Natural killer cell (primary cell): ENCODE measurements at regions of chr4 and their contacts with region 1.

Region 1: DNA sequence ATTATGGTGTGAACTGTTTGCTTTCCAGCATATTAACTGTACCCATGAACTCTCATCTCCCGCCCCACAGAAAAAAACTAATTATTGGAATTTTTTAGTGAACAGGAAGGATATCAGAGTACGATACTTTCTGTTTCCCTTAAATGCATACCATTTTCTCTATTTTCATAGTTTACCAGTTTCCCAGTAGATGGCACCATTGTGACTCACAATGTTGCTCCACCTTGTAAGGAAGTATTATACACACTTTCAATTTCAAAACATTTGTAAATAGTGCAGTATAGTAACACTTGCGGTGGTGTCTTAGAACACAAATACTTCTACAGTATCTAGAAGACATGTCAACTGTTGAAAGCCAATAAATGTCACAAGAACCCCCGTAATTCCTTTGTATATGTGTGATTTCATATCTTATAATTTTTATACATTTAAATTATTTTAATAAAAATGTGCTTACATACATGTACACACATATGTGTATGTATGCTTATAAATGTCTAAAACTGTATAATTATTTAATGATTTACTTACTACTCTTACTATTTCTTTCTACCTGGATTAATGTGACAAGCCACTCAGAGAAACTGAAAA is 167.3 kb downstream of the SLIT2 start:
- DNase-seq: peak in 1 of 2 donors; percentile 66
- ATAC-seq: peak; percentile 83 to 90 (median 89)
- H3K4me3 ChIP-seq: no peak overlapping the region
- H3K4me3 Mint-ChIP-seq: peak overlapping the region; percentile 45
- H3K27ac ChIP-seq: no peak overlapping the region
- H3K27ac Mint-ChIP-seq: no peak overlapping the region
- H3K4me1 ChIP-seq: no peaks in the 10 kb centered on the region
- H3K4me1 Mint-ChIP-seq: peaks cover 0 to 8% of the 10 kb centered on the region in 2 donors
- H3K27me3 ChIP-seq: no peaks in the 10 kb centered on the region
- H3K27me3 Mint-ChIP-seq: peaks cover 0 to 2% of the 10 kb centered on the region in 2 donors
- CTCF ChIP-seq: peak; percentile 44

Region 2: GRCh38 chr4:20370274-20370673 is 48.7 kb before region 1 on chr4:
- intact Hi-C with region 1: no loop called
- DNase-seq: no peak
- ATAC-seq: no peak
- H3K4me3 ChIP-seq: no peak overlapping the region
- H3K4me3 Mint-ChIP-seq: no peak overlapping the region
- H3K27ac ChIP-seq: no peak overlapping the region
- H3K27ac Mint-ChIP-seq: no peak overlapping the region
- H3K4me1 ChIP-seq: no peaks in the 10 kb centered on the region
- H3K4me1 Mint-ChIP-seq: no peaks in the 10 kb centered on the region
- H3K27me3 ChIP-seq: no peaks in the 10 kb centered on the region
- H3K27me3 Mint-ChIP-seq: no peaks in the 10 kb centered on the region
- CTCF ChIP-seq: no peak

Region 3: DNA sequence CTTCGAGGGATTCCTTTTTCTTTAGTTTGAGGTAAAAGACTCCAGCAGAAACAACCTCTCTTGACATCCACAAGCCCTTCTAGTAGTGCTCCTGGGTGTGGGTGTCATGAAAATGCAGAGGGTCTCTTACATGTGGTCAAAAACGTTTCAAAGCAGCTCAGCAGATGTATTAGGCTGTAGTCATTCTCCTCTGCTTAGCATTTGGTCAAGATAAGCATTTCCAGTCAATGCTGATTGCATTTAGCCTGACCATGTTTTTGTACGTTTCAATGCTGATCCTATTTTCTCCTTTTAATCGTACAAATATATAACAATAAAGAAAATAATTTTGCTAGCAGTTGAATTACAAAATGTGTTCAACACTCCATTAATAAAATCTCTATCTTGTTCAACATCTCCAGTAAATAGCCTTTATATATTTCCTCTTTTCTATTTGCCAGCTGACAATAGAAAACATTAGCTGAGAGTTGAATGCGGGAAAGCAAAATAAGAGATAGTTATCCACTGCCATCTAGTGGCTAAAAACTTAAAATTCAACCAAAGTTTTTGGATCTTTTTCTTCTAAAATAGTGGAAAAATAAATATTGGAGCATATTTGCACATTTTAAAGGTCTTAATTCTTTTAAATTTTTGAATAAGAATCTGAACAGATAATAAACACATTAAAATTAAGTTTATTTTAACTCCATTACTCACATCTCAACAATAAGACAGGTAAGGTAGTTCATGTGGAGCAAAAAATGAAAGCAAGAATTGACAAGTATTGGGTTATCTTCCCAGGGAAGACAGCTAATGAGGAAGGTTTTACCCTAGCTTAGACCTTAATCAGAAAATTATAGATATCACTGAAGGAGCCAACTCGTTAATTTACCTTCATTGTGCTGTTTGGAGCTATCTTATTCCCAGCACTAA is 266.2 kb after region 1 on chr4:
- intact Hi-C with region 1: loop called (anchors 1 kb)
- DNase-seq: peak in 1 of 2 donors; percentile 42
- ATAC-seq: no peak
- H3K4me3 ChIP-seq: no peak overlapping the region
- H3K4me3 Mint-ChIP-seq: no peak overlapping the region
- H3K27ac ChIP-seq: no peak overlapping the region
- H3K27ac Mint-ChIP-seq: no peak overlapping the region
- H3K4me1 ChIP-seq: no peaks in the 10 kb centered on the region
- H3K4me1 Mint-ChIP-seq: no peaks in the 10 kb centered on the region
- H3K27me3 ChIP-seq: peaks cover under 1% of the 10 kb centered on the region
- H3K27me3 Mint-ChIP-seq: peaks cover 17 to 37% of the 10 kb centered on the region in 2 donors
- CTCF ChIP-seq: peak; percentile 78

Region 4: GRCh38 chr4:21134994-21135393 is 716.0 kb after region 1 on chr4:
- intact Hi-C with region 1: loop called (anchors 10 kb)
- DNase-seq: peak in 1 of 2 donors; percentile 36
- ATAC-seq: peak; percentile 63 to 81 (median 66)
- H3K4me3 ChIP-seq: no peak overlapping the region
- H3K4me3 Mint-ChIP-seq: no peak overlapping the region
- H3K27ac ChIP-seq: no peak overlapping the region
- H3K27ac Mint-ChIP-seq: no peak overlapping the region
- H3K4me1 ChIP-seq: no peaks in the 10 kb centered on the region
- H3K4me1 Mint-ChIP-seq: peaks cover 5 to 7% of the 10 kb centered on the region in 2 donors
- H3K27me3 ChIP-seq: no peaks in the 10 kb centered on the region
- H3K27me3 Mint-ChIP-seq: peaks cover 0 to 6% of the 10 kb centered on the region in 2 donors
- CTCF ChIP-seq: peak; percentile 67

Region 5: GRCh38 chr4:21765810-21766407 is 1347.0 kb after region 1 on chr4:
- intact Hi-C with region 1: loop called (anchors 5 kb)
- DNase-seq: peak in 1 of 2 donors; percentile 46
- ATAC-seq: peak in 2 of 3 donors; percentile 54 to 57
- H3K4me3 ChIP-seq: no peak overlapping the region
- H3K4me3 Mint-ChIP-seq: no peak overlapping the region
- H3K27ac ChIP-seq: no peak overlapping the region
- H3K27ac Mint-ChIP-seq: no peak overlapping the region
- H3K4me1 ChIP-seq: no peaks in the 10 kb centered on the region
- H3K4me1 Mint-ChIP-seq: peaks cover 0 to 5% of the 10 kb centered on the region in 2 donors
- H3K27me3 ChIP-seq: no peaks in the 10 kb centered on the region
- H3K27me3 Mint-ChIP-seq: peaks cover 0 to 5% of the 10 kb centered on the region in 2 donors
- CTCF ChIP-seq: peak; percentile 62